Activated naive CD4-positive, alpha-beta T cell treated with anti-CD3 and anti-CD28 coated beads, Interleukin-2, amount 10 ng/mL, durations not matched to agents 7 days and 5 days (primary cell): ENCODE measurements at regions of chrX and their contacts with region 1.

Region 1: DNA sequence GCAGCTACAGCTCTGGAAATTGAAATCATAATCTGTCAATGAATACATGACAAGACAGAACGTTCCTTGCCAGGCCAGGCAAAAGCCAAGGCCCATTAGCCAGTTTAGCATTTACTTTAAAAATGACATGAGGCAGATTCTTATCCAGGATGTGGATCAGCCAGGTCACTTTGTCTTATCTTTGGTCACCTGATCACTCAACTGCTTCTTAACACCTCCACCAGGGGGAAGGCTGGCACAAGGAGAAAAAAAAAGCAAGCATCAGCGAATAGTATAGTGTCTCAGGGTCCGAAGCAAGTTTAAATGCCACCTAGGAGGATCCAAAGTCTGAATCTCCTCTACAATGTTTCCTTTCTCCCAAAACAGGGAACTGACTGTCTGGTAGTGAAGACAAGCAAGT is 18.8 kb downstream of the ATP1B4 start:
- DNase-seq: peak; percentile 36
- H3K4me3 Mint-ChIP-seq: no peak overlapping the region
- H3K27ac Mint-ChIP-seq: no peak overlapping the region
- H3K4me1 Mint-ChIP-seq: peaks cover 8% of the 10 kb centered on the region
- H3K27me3 Mint-ChIP-seq: peaks cover 4% of the 10 kb centered on the region

Region 2: GRCh38 chrX:120250522-120251271 is 130.0 kb before region 1 on chrX and contains the start of gene ZBTB33:
- CTCF ChIA-PET with region 1: no interaction called
- DNase-seq: peak; percentile 89
- H3K4me3 Mint-ChIP-seq: peak within 1 kb of the TSS; percentile 92
- H3K27ac Mint-ChIP-seq: peak within 1 kb of the TSS; percentile 96
- H3K4me1 Mint-ChIP-seq: peaks cover 36% of the 10 kb centered on the region
- H3K27me3 Mint-ChIP-seq: no peaks in the 10 kb centered on the region

Region 3: DNA sequence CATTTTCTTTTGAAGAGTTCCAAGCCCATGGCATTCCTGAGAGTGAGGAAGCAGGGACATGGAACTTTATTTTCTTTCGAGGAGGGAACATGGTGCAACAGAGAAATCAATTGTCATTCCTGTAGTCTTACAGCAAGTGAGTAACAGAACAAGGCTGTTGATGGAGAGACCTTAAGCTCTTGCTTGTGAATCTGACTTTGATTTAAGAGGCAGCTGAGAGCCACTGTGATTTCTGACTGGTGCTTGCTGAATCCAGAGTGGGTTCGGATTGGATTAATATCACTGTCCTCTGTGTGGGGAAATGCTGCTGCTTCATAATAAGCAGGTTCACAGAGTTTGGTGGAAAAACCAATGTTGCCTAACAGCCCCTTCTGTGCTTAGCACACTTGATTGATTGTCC is 23.5 kb before region 1 on chrX:
- CTCF ChIA-PET with region 1: no interaction called
- DNase-seq: no peak
- H3K4me3 Mint-ChIP-seq: no peak overlapping the region
- H3K27ac Mint-ChIP-seq: no peak overlapping the region
- H3K4me1 Mint-ChIP-seq: no peaks in the 10 kb centered on the region
- H3K27me3 Mint-ChIP-seq: no peaks in the 10 kb centered on the region

Region 4: DNA sequence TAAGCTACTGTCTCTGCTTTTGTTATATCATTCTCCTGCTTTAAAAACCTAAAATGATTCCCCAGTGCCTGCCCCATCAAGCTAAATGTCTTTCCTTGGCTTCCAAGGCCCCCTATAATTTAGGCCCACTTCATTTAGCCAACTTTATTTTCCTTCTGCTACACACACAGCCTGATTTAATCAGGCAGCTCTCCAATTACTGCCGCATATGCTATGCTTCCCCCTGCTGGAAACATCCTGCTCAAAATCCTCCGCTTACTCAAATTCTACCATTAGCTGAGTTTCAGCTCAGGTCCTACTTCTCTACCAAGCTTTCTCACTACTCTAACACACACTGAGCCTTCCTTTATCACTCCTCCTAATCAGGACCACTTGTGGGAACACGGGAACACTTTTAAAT is 71.4 kb after region 1 on chrX:
- CTCF ChIA-PET with region 1: interaction called, 19 read pairs
- DNase-seq: peak; percentile 24
- H3K4me3 Mint-ChIP-seq: no peak overlapping the region
- H3K27ac Mint-ChIP-seq: peak overlapping the region; percentile 5
- H3K4me1 Mint-ChIP-seq: peaks cover 26% of the 10 kb centered on the region
- H3K27me3 Mint-ChIP-seq: no peaks in the 10 kb centered on the region

Region 5: GRCh38 chrX:120477453-120477852 is 96.8 kb after region 1 on chrX:
- CTCF ChIA-PET with region 1: interaction called, 11 read pairs
- DNase-seq: no peak
- H3K4me3 Mint-ChIP-seq: no peak overlapping the region
- H3K27ac Mint-ChIP-seq: no peak overlapping the region
- H3K4me1 Mint-ChIP-seq: no peaks in the 10 kb centered on the region
- H3K27me3 Mint-ChIP-seq: peaks cover 5% of the 10 kb centered on the region

Region 6: DNA sequence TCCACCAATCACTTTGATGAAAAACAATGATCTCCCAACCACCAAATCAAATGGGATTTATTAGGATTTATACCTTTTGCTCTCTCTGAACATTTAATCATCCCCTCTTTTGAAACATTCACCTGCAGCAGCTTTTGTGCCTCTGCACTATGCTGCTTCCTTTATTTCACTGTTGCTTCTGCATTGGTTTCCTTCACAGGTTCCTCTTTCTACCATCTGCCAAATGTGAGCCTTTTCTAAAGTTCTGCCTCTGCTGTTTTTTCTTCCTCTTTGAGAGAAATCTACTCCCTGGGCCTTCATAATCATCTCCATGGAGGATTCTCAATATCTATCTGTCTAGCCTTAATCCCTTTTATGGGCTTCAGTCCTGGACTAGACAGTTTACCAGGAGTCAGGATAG is 155.4 kb after region 1 on chrX:
- CTCF ChIA-PET with region 1: no interaction called
- DNase-seq: no peak
- H3K4me3 Mint-ChIP-seq: no peak overlapping the region
- H3K27ac Mint-ChIP-seq: no peak overlapping the region
- H3K4me1 Mint-ChIP-seq: no peaks in the 10 kb centered on the region
- H3K27me3 Mint-ChIP-seq: no peaks in the 10 kb centered on the region